ENCODE measurements at regions of chr17 and their contacts with region 1.

Region 1: DNA sequence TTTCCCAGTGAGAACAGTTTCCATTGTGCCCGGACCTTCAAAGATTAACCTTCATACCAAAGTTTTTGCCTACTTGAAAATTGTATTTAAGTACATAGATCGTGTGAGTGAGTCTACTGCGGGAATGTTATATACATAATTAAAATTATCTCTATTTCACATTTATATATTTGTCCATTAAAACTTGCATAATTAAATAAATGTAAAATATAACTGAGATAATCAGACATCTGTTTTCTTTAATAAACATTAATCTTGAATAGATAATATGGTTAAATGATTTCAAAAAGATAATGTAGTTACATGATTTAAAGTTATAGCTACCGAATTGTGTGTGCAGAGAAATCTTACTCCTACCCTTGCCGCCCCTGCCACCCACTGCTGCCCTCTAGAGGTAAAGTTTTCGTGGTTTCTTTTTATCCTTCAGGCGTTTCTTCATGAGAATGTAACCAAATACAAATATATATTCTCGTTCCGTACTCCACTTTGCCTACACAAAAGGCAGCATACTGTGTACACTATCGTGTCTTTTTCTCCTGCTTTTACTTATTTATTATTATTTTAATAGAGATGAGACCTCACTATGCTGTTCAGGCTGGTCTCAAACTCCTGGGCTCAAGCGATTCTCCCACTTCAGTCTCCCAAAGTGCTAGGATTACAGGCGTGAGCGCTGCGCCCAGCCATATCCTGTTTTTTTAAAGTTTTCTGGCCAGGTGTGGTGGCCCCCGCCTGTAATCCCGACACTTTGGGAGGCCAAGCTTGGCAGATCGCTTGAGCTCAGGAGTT is 35.6 kb downstream of the RPA1 start:
- DNase-seq: peak; percentile 35
- H3K4me3 ChIP-seq: no peak overlapping the region
- H3K27ac ChIP-seq: no peak overlapping the region
- H3K4me1 ChIP-seq: no peaks in the 10 kb centered on the region
- H3K27me3 ChIP-seq: no peaks in the 10 kb centered on the region
- CTCF ChIP-seq: peak; percentile 65 to 73

Region 2: DNA sequence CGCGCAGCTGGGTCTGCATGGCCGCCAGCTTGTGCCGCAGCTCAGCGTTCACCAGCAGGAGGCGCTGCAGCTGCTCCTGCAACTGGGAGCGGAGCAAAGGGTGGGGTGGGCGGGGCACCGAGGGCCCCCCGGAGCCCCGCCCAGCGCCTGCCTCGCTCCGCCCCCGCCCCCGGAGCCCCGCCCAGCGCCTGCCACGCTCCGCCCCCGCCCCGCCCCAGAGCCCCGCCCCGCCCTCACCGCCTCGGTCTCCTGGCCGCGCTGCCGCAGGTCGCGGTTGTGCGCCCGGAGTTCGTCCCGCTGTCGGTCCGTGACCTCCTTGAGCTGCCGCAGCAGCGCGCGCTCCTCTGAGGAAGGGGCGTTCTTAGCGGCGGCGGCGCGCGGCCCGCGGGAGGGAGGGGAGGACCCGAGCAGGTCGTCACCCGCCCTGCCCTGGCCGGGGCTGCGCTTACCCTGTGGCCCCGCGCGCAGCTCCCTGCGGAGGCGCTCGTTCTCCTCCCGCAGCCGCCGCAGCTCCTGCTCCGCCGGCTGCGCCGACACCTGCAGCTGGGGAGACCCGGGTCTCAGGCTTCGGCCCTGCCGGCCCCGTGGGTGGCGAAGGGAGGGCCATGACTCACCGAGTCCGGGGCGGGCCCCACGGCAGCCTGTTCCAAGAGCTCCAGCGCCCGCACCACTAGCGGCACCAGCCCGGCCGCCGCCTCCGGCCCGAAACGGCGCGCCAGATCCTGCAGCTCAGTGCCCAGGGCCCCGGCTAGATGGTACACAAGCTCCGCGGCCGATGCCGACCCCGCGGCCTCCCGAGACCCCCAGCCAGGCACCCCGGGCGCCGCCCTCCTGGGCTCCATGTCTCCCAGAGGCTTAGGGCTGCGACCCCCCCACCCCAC is 216.2 kb before region 1 on chr17:
- CTCF ChIA-PET with region 1: no interaction called
- dilution Hi-C with region 1: loop called (anchors 10 kb)
- in situ Hi-C with region 1: no loop called
- intact Hi-C with region 1: no loop called
- DNase-seq: peak; percentile 86
- H3K4me3 ChIP-seq: peak overlapping the region; percentile 34 to 77 (median 63)
- H3K27ac ChIP-seq: peak overlapping the region; percentile 34
- H3K4me1 ChIP-seq: peaks cover 41% of the 10 kb centered on the region
- H3K27me3 ChIP-seq: no peaks in the 10 kb centered on the region
- CTCF ChIP-seq: peak; percentile 72 to 85

Region 3: DNA sequence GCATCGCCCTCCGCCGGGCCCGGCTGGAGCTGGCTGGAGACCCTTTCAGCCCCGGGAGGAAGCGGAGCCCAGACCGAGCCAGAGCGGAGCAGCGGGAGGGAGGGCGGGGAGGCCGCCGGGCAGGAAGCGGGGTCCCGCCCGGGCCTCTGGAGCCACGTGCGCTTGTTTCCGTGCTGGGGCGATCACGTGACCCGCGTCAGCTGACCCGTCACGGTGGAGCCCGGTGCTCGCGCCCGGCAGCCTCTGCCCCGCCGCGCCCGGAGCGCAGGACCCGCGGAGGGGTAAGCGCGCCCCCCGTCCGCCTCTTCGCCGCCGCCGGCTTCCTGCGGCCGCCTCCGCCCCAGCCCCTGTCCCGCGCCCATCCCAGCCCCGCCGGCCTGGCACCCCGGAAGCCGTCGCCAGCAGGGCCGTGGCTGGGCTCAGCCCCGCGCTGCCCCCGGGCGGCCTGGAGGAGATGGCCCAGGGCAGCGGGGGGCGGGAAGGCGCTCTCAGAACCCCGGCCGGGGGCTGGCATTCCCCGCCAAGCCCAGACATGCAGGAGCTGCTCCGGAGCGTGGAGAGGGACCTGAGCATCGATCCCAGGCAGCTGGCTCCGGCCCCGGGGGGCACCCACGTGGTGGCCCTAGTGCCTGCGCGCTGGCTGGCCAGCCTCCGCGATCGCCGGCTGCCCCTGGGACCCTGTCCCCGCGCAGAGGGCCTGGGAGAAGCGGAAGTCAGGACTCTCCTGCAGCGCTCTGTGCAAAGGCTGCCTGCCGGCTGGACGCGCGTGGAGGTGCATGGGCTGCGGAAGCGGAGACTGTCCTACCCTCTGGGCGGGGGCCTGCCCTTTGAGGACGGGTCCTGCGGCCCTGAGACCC is 140.7 kb before region 1 on chr17 and contains the start of gene WDR81:
- CTCF ChIA-PET with region 1: interaction called, 3 read pairs
- dilution Hi-C with region 1: no loop called
- in situ Hi-C with region 1: loop called in 1 of 2 experiments (anchors 25 kb)
- intact Hi-C with region 1: loop called (anchors 1 kb)
- DNase-seq: peak; percentile 46
- H3K4me3 ChIP-seq: peak within 1 kb of the TSS; percentile 39 to 60 (median 56)
- H3K27ac ChIP-seq: peak within 1 kb of the TSS; percentile 26
- H3K4me1 ChIP-seq: peaks cover 41% of the 10 kb centered on the region
- H3K27me3 ChIP-seq: no peaks in the 10 kb centered on the region
- CTCF ChIP-seq: no peak
- total RNA-seq, gene WDR81: 17.8 to 35.5 TPM

Region 4: DNA sequence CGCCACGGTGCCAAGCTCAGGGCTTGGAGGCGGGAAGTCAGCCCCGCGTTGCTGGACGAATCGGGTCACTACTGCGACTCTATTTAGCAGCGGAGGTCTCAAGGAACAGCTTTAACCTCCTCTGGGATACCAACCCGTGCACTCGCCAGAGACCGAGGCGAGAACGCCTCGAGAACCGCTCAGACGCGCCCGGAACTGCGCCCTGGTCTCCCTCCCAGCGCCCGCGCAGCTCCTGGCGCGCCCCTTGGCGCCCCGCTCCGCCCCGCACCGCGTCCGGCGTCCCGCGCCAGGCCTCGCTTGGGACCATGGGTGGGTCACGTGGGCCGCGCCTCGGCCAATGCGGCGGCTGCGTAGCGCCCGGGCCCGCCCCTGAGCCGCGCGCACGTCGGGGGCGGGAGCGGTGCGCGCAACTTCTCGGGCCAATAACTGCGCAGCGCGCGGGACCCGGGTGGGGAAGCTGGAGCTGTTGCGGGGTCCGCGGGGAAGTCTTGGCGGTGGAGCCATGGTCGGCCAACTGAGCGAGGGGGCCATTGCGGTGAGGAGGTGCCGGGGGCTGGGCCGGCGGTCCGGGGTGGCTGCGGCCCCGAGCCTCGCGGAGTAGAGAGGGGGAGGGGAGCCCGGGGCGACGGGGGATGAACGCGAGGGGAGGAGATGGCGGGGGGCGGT is 35.7 kb before region 1 on chr17 and contains the starts of genes RPA1 and SMYD4:
- CTCF ChIA-PET with region 1: no interaction called
- dilution Hi-C with region 1: no loop called
- in situ Hi-C with region 1: no loop called
- intact Hi-C with region 1: loop called (anchors 1 kb)
- DNase-seq: peak; percentile 87
- H3K4me3 ChIP-seq: peak within 1 kb of the TSS; percentile 78 to 97 (median 85)
- H3K27ac ChIP-seq: peak within 1 kb of the TSS; percentile 46
- H3K4me1 ChIP-seq: peaks cover 5% of the 10 kb centered on the region
- H3K27me3 ChIP-seq: no peaks in the 10 kb centered on the region
- CTCF ChIP-seq: no peak
- total RNA-seq, gene RPA1: 17.2 to 78.5 TPM
- total RNA-seq, gene SMYD4: 12.7 to 15.0 TPM

Region 5: DNA sequence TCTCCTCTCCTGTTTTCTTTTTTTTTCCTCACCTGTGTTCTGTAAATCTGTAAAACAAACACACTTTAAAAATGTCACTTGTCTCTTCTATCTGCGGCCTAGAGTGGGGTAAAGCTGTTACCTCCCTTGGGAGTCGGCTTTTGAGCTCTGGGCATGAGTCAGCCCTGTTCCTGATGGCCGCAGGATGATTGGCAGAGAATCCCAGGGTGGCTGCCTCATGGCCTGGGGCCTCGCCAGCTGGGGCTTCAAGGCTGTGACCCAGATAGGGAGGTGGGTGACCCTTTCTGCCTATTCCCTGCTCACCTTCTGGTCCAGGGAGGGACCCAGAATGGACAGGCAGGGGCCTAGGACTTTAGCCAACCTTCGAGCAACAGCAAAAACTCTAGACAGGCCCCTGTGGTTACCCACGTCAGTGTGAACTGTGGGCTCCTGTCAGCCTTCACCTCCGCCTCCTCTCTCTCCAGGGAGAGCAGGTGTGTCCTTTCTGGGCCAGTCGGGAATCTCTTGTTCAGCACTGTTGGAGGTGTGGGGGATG is 1018.2 kb after region 1 on chr17:
- CTCF ChIA-PET with region 1: no interaction called
- dilution Hi-C with region 1: no loop called
- in situ Hi-C with region 1: no loop called
- intact Hi-C with region 1: no loop called
- DNase-seq: peak; percentile 31
- H3K4me3 ChIP-seq: no peak overlapping the region
- H3K27ac ChIP-seq: no peak overlapping the region
- H3K4me1 ChIP-seq: peaks cover 13% of the 10 kb centered on the region
- H3K27me3 ChIP-seq: no peaks in the 10 kb centered on the region
- CTCF ChIP-seq: no peak

Measured in mammary epithelial cell (primary cell).